Tibial artery (tissue), 4 donors: ENCODE measurements at regions of chr4 and their contacts with region 1.

Region 1: GRCh38 chr4:173494013-173494970 is 35.7 kb downstream of the HAND2 start:
- DNase-seq: peak; percentile 66 to 74
- H3K4me3 ChIP-seq: peak overlapping the region; percentile 46 to 53
- H3K27ac ChIP-seq: peak overlapping the region in 1 of 2 donors; percentile 22
- H3K4me1 ChIP-seq: peaks cover 0 to 27% (median 2%) of the 10 kb centered on the region in 4 donors
- H3K27me3 ChIP-seq: no peaks in the 10 kb centered on the region
- CTCF ChIP-seq: peak; percentile 73 to 79

Region 2: GRCh38 chr4:173424899-173425805 is 69.1 kb before region 1 on chr4:
- intact Hi-C with region 1: loop called (anchors 2 kb)
- DNase-seq: no peak
- H3K4me3 ChIP-seq: no peak overlapping the region
- H3K27ac ChIP-seq: peak overlapping the region; percentile 63 to 70
- H3K4me1 ChIP-seq: peaks cover 0 to 40% (median 6%) of the 10 kb centered on the region in 4 donors
- H3K27me3 ChIP-seq: no peaks in the 10 kb centered on the region
- CTCF ChIP-seq: no peak

Region 3: DNA sequence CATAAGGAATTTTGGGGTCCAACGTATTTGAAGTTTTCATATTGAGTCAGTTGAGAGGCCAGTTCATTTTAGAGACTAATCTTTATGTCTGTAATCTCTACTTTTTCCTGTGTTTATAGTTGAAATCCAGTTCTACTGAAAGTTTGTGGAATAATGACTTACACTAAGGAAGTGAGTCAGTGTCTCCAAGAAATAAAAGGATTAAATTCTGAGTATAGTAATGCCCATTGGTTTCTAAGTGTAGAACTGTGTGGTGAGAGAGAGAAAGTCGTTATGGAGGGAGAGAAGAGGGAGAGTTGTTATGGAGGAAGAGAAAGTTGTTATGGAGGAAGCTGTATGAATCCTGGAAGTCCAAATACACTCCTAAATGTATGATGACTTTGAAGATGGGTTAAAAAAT is 300.4 kb after region 1 on chr4:
- intact Hi-C with region 1: no loop called
- DNase-seq: no peak
- H3K4me3 ChIP-seq: no peak overlapping the region
- H3K27ac ChIP-seq: no peak overlapping the region
- H3K4me1 ChIP-seq: no peaks in the 10 kb centered on the region
- H3K27me3 ChIP-seq: no peaks in the 10 kb centered on the region
- CTCF ChIP-seq: no peak

Region 4: GRCh38 chr4:173871643-173872042 is 377.4 kb after region 1 on chr4:
- intact Hi-C with region 1: no loop called
- DNase-seq: no peak
- H3K4me3 ChIP-seq: no peak overlapping the region
- H3K27ac ChIP-seq: no peak overlapping the region
- H3K4me1 ChIP-seq: no peaks in the 10 kb centered on the region
- H3K27me3 ChIP-seq: no peaks in the 10 kb centered on the region
- CTCF ChIP-seq: no peak

Region 5: GRCh38 chr4:173935622-173936405 is 441.5 kb after region 1 on chr4:
- intact Hi-C with region 1: no loop called
- DNase-seq: no peak
- H3K4me3 ChIP-seq: no peak overlapping the region
- H3K27ac ChIP-seq: no peak overlapping the region
- H3K4me1 ChIP-seq: peaks cover 0 to 7% (median 2%) of the 10 kb centered on the region in 4 donors
- H3K27me3 ChIP-seq: no peaks in the 10 kb centered on the region
- CTCF ChIP-seq: no peak

Region 6: GRCh38 chr4:173990126-173990868 is 496.0 kb after region 1 on chr4:
- intact Hi-C with region 1: no loop called
- DNase-seq: no peak
- H3K4me3 ChIP-seq: no peak overlapping the region
- H3K27ac ChIP-seq: no peak overlapping the region
- H3K4me1 ChIP-seq: no peaks in the 10 kb centered on the region
- H3K27me3 ChIP-seq: no peaks in the 10 kb centered on the region
- CTCF ChIP-seq: peak; percentile 30 to 43